ENCODE measurements at regions of chr16 and their contacts with region 1.

Region 1: DNA sequence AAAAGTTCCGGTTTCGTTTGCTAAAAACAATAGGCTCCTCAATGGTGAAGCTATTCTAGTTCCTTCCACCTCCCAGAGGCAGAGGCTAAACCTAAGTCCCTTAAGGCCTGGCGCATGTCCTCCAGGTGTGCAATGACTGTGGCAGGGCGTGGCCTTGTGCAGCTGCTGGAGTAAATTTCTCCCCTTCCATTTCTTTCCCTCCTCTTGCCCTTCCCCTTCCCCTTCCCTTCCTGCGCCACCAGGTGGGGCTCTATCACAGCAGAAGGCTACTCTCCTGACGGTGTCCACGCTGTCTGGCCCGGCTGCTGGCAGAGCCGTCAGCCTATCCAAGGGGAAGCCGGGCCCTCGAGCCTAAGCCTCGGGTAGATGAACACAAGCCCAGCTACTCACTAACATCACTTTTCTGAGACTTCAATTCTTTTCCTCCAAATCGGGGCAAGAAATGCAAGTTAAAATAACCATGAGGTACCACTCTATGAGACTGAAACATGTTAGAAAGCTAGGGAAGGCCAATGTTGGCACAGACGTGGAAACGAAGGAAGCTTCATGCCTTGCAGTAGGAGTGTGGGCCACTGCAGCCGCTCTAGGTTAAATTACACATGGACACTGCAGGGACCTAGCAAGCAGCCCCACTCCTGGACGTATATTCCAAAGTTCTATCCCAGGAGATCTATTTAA is 34.4 kb downstream of the C16orf78 start:
- DNase-seq: peak; percentile 66 to 87 (median 84)
- H3K4me3 ChIP-seq: no peak overlapping the region
- H3K27ac ChIP-seq: peak overlapping the region in 1 of 59 donors; percentile 44
- H3K27me3 ChIP-seq: peaks cover 0 to 6% (median 0%) of the 10 kb centered on the region in 45 donors
- CTCF ChIP-seq: peak; percentile 50 to 97 (median 87)

Region 2: GRCh38 chr16:49592546-49593423 is 184.8 kb after region 1 on chr16:
- intact Hi-C with region 1: loop called (anchors 2 to 10 kb)
- DNase-seq: peak in 2 of 10 donors; percentile 30 to 32
- H3K4me3 ChIP-seq: no peak overlapping the region
- H3K27ac ChIP-seq: no peak overlapping the region
- H3K27me3 ChIP-seq: peaks cover 0 to 29% (median 0%) of the 10 kb centered on the region in 45 donors
- CTCF ChIP-seq: peak; percentile 49 to 83 (median 71)

Region 3: DNA sequence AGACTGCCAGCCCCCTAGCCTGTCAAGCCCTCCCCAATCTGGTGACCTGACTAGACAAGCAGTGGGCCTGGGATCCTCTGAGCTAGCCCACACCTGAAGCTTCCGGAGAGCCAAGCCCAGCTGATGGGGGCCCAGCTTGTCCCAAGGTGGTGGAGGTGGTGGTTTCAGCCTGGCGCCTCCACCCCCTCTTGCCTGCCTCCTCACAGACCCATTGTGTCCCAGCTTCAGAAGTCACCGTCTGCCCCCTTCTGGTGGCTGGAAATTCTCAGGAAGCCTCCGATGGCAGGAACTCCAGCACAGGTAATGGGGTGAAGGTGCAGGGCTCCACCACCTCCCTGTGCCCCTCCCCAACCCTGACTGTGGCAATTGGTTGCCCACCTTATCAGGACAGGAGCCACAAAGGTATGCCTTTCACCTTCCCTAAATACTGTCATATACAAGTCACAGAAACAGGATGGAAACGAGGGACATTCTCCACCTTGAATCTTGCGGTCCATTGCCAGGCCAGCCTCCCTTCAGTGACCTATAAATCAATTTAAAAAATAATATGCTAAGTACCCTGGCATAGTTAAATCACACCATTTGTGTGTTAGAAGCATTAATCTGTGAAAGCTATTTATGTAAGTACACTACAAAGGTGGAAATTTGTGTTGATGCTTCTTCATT is 513.9 kb after region 1 on chr16:
- intact Hi-C with region 1: loop called (anchors 5 to 10 kb)
- DNase-seq: peak; percentile 25 to 73 (median 56)
- H3K4me3 ChIP-seq: no peak overlapping the region
- H3K27ac ChIP-seq: no peak overlapping the region
- H3K27me3 ChIP-seq: peaks cover 0 to 9% (median 0%) of the 10 kb centered on the region in 45 donors
- CTCF ChIP-seq: peak; percentile 21 to 78 (median 60)

Region 4: DNA sequence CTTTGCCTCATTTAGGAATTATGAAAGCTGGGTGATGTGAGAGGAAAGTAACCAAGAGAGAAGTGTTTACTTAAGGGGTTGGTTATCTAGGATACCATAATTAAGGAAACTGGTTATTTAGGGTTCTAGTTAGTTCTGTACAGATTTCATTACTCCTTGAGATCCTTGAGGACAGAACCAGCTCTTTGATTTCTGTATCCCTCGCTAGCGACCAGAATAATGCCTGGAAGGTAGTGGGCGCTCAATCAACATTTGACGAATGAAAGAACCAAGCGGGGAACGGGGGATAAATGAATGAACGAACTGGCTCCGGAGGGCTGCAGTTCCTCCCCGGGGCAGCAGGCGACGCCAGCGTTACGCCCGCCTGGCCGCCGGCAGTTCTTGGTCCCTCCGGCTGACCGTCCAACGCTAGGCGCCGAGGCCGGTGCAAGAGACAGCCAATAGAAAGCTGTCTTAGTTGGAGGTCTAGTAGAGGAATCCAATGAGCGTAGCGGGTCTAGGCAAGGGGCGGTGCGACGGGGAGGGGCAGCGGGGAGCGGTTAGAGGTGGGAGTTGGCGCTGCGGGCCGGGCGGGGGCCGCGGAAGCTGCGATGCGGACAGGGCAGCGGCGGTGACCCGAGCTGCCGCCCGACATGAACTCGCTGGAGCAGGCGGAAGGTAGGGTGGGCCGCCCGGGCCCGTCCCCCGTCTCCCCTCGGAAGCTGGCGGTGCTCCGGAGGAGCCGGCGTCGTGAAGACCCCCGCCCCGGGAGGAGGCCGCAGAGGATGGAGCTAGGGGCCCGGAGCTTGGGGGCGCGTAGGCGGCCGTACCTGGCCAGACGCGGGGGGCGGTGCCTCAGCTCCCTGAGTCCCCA is 616.9 kb after region 1 on chr16 and contains the start of gene CNEP1R1:
- intact Hi-C with region 1: loop called in 1 of 2 experiments (anchors 10 kb)
- DNase-seq: peak; percentile 87 to 95 (median 94)
- H3K4me3 ChIP-seq: peak within 1 kb of the TSS; percentile 71 to 100 (median 99)
- H3K27ac ChIP-seq: peak within 1 kb of the TSS in 55 of 59 donors; percentile 27 to 93 (median 81)
- H3K27me3 ChIP-seq: no peaks in the 10 kb centered on the region
- CTCF ChIP-seq: peak; percentile 97 to 100 (median 100)
- total RNA-seq, gene CNEP1R1: 16.8 to 35.7 (median 24.8) TPM

Region 5: GRCh38 chr16:50202926-50203624 is 795.1 kb after region 1 on chr16:
- intact Hi-C with region 1: loop called in 1 of 2 experiments (anchors 10 kb)
- DNase-seq: no peak
- H3K4me3 ChIP-seq: no peak overlapping the region
- H3K27ac ChIP-seq: peak overlapping the region in 2 of 59 donors; percentile 55 to 65
- H3K27me3 ChIP-seq: no peaks in the 10 kb centered on the region
- CTCF ChIP-seq: no peak

Measured in dorsolateral prefrontal cortex (tissue), 120 donors.